H1 (cell line): ENCODE measurements at regions of chr5 and their contacts with region 1.

Region 1: DNA sequence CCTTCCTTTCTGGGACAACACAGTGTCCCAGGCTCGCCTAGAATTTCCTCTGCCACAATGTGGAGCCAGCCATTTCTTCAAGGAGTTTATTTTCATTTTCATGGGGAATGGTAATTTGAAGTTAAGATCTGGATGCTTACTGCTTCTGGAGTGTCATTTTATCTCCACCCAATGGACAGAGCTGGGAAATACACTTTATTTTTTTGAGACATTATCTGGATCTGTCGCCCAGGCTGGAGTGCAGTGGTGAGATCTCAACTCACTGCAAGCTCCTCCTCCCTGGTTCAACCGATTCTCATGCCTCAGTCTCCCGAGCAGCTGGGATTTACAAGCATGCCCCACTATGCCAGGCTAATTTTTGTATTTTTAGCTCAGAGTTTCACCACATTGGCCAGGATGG is 12.7 kb upstream of the THG1L start:
- DNase-seq: no peak
- H3K4me3 ChIP-seq: no peak overlapping the region
- H3K27ac ChIP-seq: no peak overlapping the region
- H3K4me1 ChIP-seq: no peaks in the 10 kb centered on the region
- H3K27me3 ChIP-seq: no peaks in the 10 kb centered on the region
- CTCF ChIP-seq: peak in 2 of 3 experiments; percentile 33 to 36; a peak in 3 of 4 replicates
- EP300 ChIP-seq: no peak
- POLR2A ChIP-seq: no peak
- RAD21 ChIP-seq: peak; percentile 68 to 69

Region 2: DNA sequence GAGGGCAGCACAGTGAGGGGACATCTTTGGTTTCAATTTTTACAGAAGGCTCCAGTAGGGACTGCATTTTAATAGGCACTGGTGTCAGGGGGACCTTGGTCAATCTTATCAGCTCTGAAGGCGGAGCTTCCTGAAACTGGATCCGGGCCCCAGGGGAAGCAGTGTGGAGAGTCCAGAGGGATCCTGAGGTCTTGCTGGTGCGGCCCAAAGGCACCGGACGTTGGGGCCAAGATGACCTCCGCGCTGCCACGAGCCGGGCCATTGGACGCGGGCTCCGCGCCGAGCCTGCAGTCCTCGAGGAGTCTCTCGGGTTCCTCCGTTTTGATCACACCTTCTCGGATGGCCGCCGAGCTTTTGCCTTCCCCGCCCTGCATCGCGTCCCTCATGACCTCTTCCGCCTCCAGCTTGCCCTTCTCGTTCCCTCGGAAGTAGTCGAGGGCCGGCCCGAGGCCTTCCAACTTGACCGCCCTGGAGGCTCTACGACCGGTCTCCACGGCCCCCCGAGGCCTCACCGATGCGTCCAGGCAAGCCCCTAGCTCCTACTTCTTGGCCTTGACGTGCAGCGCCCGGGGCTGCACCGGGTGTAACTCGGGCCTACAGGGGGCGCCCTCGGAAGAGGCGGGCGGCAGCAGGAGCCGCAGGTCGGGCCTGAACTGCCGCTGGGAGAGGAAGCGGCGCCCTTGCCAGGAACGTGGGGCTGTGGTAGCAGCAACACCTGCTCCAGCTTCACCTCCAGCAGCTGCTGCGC is 28.4 kb before region 1 on chr5:
- CTCF ChIA-PET with region 1: interaction called, 10 read pairs
- POLR2A ChIA-PET with region 1: no interaction called
- DNase-seq: peak in 1 of 2 experiments; percentile 60
- H3K4me3 ChIP-seq: no peak overlapping the region
- H3K27ac ChIP-seq: no peak overlapping the region
- H3K4me1 ChIP-seq: no peaks in the 10 kb centered on the region
- H3K27me3 ChIP-seq: no peaks in the 10 kb centered on the region
- CTCF ChIP-seq: peak; percentile 23 to 36 (median 24); a peak in 3 of 4 replicates
- EP300 ChIP-seq: no peak
- POLR2A ChIP-seq: no peak
- RAD21 ChIP-seq: peak in 1 of 2 experiments; percentile 4; a peak in 1 of 4 replicates

Region 3: GRCh38 chr5:157731272-157732129 is 13.0 kb after region 1 on chr5 and contains the start of gene THG1L:
- CTCF ChIA-PET with region 1: interaction called, 11 read pairs
- POLR2A ChIA-PET with region 1: interaction called, 5 read pairs
- DNase-seq: peak; percentile 94 to 100
- H3K4me3 ChIP-seq: peak within 1 kb of the TSS; percentile 79 to 98 (median 90)
- H3K27ac ChIP-seq: peak within 1 kb of the TSS; percentile 96
- H3K4me1 ChIP-seq: no peaks in the 10 kb centered on the region
- H3K27me3 ChIP-seq: no peaks in the 10 kb centered on the region
- CTCF ChIP-seq: no peak
- EP300 ChIP-seq: no peak
- POLR2A ChIP-seq: peak; percentile 93 to 97
- RAD21 ChIP-seq: no peak
- total RNA-seq, gene THG1L: 12.4 and 13.0 TPM in 2 replicates

Region 4: DNA sequence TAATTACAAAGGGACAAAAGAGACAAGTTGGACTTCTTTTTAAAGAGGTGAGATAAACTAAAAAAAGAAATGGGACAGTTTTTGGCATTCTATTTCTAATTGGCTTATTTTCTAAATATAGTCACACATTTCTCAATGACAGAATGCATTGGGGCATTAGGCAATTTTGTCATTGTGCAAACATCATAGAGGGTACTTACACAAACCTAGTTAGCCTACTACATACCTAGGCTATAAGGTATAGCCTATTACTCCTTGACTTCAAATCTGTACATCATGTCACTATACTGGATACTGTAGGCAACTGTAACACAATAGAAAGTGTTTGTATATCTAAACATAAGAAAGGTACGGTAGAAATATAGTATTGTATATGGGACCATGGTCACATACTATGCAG is 81.1 kb after region 1 on chr5:
- CTCF ChIA-PET with region 1: no interaction called
- POLR2A ChIA-PET with region 1: no interaction called
- DNase-seq: no peak
- H3K4me3 ChIP-seq: no peak overlapping the region
- H3K27ac ChIP-seq: no peak overlapping the region
- H3K4me1 ChIP-seq: no peaks in the 10 kb centered on the region
- H3K27me3 ChIP-seq: no peaks in the 10 kb centered on the region
- CTCF ChIP-seq: no peak
- EP300 ChIP-seq: no peak
- POLR2A ChIP-seq: no peak
- RAD21 ChIP-seq: no peak

Region 5: DNA sequence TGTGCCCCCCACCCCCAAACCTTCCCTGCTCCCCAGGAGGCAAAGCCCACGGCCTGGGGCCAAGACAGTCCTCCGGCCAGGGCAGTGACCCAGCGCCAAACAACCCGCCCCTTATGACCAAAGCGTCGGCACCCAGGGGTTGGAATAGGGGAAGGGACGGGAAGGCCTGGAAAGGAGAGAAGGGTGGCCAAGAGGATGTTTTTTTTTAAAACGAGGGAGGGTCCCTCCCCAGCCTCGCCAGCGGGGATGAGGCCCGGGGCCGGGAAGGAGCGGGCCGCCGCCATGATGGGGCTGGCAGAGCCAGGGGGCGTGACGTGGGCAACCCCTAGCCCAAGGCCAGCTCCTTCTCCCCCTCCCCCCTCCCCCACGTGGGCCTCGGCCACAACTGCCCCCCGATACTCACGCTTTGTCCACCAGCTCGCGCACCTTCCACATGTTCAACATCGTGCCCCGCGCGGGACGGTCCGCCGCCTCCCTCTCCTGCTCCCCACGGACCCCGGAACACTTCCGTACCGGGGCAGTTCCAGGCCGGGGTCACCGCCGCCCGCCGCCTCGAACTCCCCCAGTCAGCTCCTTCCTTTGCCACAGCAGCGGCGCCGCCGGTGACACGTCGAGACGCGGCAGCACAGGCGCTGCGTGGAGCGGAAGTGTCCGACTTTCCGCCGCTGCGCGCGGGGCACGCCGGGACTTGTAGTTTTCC is 140.2 kb after region 1 on chr5 and contains the start of gene CLINT1:
- CTCF ChIA-PET with region 1: no interaction called
- POLR2A ChIA-PET with region 1: no interaction called
- DNase-seq: peak; percentile 65 to 92
- H3K4me3 ChIP-seq: peak within 1 kb of the TSS; percentile 60 to 90 (median 84)
- H3K27ac ChIP-seq: peak within 1 kb of the TSS; percentile 81
- H3K4me1 ChIP-seq: peaks cover 0 to 7% (median 4%) of the 10 kb centered on the region in 4 experiments; a peak in 3 of 7 replicates
- H3K27me3 ChIP-seq: no peaks in the 10 kb centered on the region
- CTCF ChIP-seq: no peak
- EP300 ChIP-seq: peak in 1 of 2 experiments; percentile 34; a peak in 1 of 3 replicates
- POLR2A ChIP-seq: peak; percentile 40 to 82
- RAD21 ChIP-seq: no peak; a peak in 1 of 4 replicates
- total RNA-seq, gene CLINT1: 84.7 and 85.9 TPM in 2 replicates